OCI-LY7 (cell line): ENCODE measurements at regions of chr10 and their contacts with region 1.

Region 1: DNA sequence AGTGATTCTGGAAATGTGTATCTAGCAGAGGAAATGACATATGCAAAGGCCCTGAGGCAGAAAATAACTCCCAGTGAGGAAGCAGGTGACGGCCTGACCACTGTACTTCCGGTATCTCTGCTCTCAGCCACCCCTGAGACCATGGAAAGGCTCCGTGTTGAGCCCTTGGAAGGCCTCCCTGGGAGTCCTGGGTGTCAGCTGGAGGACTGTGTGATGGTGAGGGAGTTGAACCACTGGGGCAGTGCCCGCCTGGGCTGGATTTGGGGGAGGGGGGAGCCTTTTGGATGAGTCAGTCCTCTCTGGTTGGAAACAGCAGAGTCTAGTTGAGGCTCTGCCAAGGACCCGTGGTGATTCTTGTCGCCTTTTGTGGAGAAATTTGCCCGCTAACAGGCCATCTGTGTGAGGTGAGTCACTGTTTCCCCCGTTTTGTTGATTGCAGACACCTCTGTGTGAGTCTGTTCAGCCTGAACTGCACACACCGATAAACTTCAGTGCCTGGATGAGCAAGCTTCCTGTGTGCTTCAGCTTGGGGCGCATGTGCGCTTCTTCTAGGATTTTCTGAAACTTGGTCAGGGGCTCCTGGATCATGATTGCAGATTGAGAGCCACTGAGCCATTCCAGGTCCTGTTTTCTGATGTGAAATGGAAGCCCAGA is 98.6 kb downstream of the GRK5 start:
- DNase-seq: peak; percentile 96
- H3K4me3 ChIP-seq: peak overlapping the region; percentile 67
- H3K27ac ChIP-seq: peak overlapping the region; percentile 97
- H3K4me1 ChIP-seq: peaks cover 96% of the 10 kb centered on the region
- CTCF ChIP-seq: no peak

Region 2: GRCh38 chr10:118754720-118755480 is 551.1 kb before region 1 on chr10 and contains the start of gene CACUL1:
- CTCF ChIA-PET with region 1: no interaction called
- POLR2A ChIA-PET with region 1: no interaction called
- intact Hi-C with region 1: loop called (anchors 10 kb)
- DNase-seq: peak; percentile 99
- H3K4me3 ChIP-seq: peak within 1 kb of the TSS; percentile 98
- H3K27ac ChIP-seq: peak within 1 kb of the TSS; percentile 60
- H3K4me1 ChIP-seq: peaks cover 26% of the 10 kb centered on the region
- CTCF ChIP-seq: no peak
- total RNA-seq, gene CACUL1: 12.0 and 12.8 TPM in 2 replicates

Region 3: DNA sequence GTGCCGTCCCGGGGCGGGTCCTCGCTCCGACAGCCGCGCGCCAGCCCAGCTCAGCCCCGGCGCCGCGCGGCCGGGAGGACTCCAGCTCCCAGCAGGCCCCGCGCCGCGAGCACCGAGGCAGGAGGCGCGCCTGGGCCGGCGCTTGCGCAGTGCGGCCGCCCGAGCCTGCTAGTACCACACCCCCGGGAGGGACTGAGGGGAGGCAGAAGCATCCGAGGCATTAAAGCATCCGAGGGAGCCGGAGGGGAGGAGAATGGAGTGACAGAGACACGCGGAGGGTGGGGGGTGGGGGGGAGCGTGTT is 98.7 kb before region 1 on chr10 and contains the start of gene GRK5:
- CTCF ChIA-PET with region 1: interaction called, 3 read pairs
- POLR2A ChIA-PET with region 1: interaction called, 13 read pairs
- intact Hi-C with region 1: loop called (anchors 1 kb)
- DNase-seq: peak; percentile 98
- H3K4me3 ChIP-seq: peak within 1 kb of the TSS; percentile 75
- H3K27ac ChIP-seq: peak within 1 kb of the TSS; percentile 69
- H3K4me1 ChIP-seq: peaks cover 28% of the 10 kb centered on the region
- CTCF ChIP-seq: no peak
- total RNA-seq, gene GRK5: 4.2 and 4.7 TPM in 2 replicates

Region 4: GRCh38 chr10:119253433-119254174 is 52.4 kb before region 1 on chr10:
- CTCF ChIA-PET with region 1: no interaction called
- POLR2A ChIA-PET with region 1: no interaction called
- intact Hi-C with region 1: no loop called
- DNase-seq: no peak
- H3K4me3 ChIP-seq: no peak overlapping the region
- H3K27ac ChIP-seq: no peak overlapping the region
- H3K4me1 ChIP-seq: no peaks in the 10 kb centered on the region
- CTCF ChIP-seq: no peak

Region 5: DNA sequence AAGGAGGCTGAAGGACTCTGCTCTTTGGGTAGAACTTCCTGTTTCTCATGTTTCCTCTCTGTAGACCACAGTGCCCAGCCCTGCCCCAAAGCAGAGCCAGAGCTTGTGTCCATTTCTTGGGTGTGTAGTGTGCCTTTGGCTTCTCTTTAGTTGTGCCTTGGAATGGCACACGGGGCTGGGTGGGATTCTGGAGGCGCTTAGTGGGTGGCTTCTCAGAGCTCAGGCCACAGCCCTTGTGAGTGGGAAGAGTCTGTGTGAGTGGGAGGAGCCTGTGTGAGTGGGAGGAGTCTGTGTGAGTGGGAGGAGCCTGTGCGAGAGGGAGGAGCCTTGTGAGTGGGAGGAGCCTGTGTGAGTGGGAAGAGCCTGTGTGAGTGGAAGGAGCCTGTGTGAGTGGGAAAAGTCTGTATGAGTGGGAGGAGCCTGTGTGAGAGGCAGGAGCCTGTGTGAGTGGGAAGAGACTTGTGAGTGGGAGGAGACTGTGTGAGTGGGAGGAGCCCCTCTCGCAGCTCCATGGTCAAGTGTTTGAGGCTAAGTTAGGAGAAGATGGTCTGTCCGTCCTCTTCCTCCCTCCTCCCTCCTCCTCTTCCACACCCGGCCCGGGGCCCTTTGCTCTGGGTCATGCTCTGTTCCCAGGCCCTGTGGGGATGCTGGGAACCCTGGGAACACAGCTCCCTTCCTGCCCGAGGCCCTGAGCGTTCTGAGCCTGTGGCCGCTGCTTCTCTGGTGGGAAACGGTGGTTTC is 54.4 kb after region 1 on chr10:
- CTCF ChIA-PET with region 1: no interaction called
- POLR2A ChIA-PET with region 1: interaction called, 3 read pairs
- intact Hi-C with region 1: loop called (anchors 2 kb)
- DNase-seq: peak; percentile 42
- H3K4me3 ChIP-seq: no peak overlapping the region
- H3K27ac ChIP-seq: no peak overlapping the region
- H3K4me1 ChIP-seq: peaks cover 26% of the 10 kb centered on the region
- CTCF ChIP-seq: no peak

Region 6: GRCh38 chr10:119416855-119417254 is 110.9 kb after region 1 on chr10:
- CTCF ChIA-PET with region 1: interaction called, 5 read pairs
- POLR2A ChIA-PET with region 1: no interaction called
- intact Hi-C with region 1: loop called (anchors 1 kb)
- DNase-seq: peak; percentile 82
- H3K4me3 ChIP-seq: no peak overlapping the region
- H3K27ac ChIP-seq: no peak overlapping the region
- H3K4me1 ChIP-seq: no peaks in the 10 kb centered on the region
- CTCF ChIP-seq: peak; percentile 89

Region 7: DNA sequence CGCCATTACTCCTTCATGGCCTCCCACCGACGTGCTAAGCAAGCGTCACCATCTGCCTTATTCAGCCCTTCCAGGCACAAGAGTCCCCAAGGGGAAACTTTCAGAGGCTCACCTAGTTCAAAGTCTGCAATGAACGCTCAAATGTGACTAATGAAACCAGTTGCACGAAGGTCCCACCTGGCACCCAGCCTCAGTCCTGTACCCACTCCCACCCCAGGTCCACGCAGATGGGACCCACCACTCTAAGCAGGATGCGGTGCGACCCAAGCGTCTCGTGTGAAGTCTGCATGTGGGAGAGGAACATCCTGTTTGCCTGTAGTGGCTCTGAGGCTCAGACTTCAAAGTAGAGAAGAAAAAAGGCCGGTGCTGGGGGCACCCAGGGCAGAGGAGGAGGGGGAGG is 196.2 kb after region 1 on chr10:
- CTCF ChIA-PET with region 1: no interaction called
- POLR2A ChIA-PET with region 1: no interaction called
- intact Hi-C with region 1: loop called (anchors 5 kb)
- DNase-seq: peak; percentile 88
- H3K4me3 ChIP-seq: peak overlapping the region; percentile 28
- H3K27ac ChIP-seq: peak overlapping the region; percentile 54
- H3K4me1 ChIP-seq: peaks cover 33% of the 10 kb centered on the region
- CTCF ChIP-seq: no peak